HEK293 (cell line): ENCODE measurements at regions of chr19 and their contacts with region 1.

Region 1: DNA sequence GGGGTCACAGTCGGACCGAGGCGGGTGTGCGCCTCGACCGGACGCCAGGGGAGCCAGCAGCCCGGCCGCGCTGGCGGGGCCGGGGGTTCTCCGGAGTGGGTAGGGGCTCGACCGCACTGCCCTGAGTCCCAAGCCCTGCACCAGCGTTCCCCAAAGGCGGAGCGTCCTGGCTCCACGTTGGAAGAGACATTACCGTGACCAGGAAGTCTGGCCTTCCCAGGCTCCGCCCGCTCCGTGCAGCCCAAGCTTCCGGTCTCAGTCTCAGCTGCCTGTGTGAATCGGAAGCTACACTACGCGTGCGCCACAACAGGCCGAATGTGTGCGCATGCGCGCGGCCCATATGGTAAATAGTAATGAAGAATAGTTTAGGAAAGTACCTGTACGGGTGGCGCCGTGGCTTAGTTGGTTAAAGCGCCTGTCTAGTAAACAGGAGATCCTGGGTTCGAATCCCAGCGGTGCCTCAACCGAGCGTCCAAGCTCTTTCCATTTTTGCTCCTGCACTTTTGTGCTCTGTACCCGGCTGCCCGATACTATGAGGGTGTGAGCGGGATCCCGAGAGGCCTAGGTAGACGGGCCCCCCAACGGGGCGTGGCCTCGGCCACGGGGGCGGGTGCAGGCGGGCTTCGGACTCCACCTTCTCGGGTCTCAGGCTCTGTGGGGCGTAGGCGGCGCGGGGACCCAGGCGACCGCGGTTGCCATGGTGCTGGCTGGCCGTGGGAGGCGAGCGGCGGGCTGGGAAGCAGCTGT is 17.3 kb upstream of the LRP3 start:
- H3K4me3 ChIP-seq: peak overlapping the region; percentile 59
- H3K27ac ChIP-seq: peak overlapping the region; percentile 88
- H3K4me1 ChIP-seq: peaks cover 20% of the 10 kb centered on the region
- CTCF ChIP-seq: no peak; the same call in 1 of the 2 replicates

Region 2: GRCh38 chr19:33143897-33144405 is 32.9 kb before region 1 on chr19:
- CTCF ChIA-PET with region 1: interaction called, 79 read pairs
- POLR2A ChIA-PET with region 1: interaction called, 12 read pairs
- H3K4me3 ChIP-seq: no peak overlapping the region
- H3K27ac ChIP-seq: no peak overlapping the region
- H3K4me1 ChIP-seq: peaks cover 3% of the 10 kb centered on the region; the same call in 1 of the 2 replicates
- CTCF ChIP-seq: peak; percentile 99

Region 3: DNA sequence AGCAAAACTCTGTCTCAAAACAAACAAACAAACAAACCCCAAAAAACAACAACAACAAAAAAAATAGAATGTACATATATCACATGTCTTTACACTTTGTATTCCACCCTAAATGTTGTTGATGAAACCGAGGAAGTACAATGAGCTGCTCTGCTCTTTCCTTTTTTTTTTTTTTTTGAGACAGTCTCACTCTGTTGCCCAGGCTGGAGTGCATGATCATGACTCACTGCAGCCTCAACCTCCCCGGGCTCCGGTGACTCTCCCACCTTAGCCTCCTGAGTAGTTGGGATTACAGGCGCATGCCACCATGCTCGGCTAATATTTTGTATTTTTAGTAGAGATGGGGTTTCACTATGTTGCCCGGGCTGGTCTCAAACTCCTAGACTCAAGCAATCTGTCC is 13.4 kb before region 1 on chr19:
- CTCF ChIA-PET with region 1: interaction called, 35 read pairs
- POLR2A ChIA-PET with region 1: interaction called, 43 read pairs
- H3K4me3 ChIP-seq: no peak overlapping the region
- H3K27ac ChIP-seq: no peak overlapping the region
- H3K4me1 ChIP-seq: peaks cover 9% of the 10 kb centered on the region
- CTCF ChIP-seq: no peak

Region 4: GRCh38 chr19:33302175-33302973 is 125.5 kb after region 1 on chr19 and contains the start of gene CEBPA:
- CTCF ChIA-PET with region 1: no interaction called
- POLR2A ChIA-PET with region 1: interaction called, 17 read pairs
- H3K4me3 ChIP-seq: peak within 1 kb of the TSS; percentile 48
- H3K27ac ChIP-seq: peak within 1 kb of the TSS; percentile 98
- H3K4me1 ChIP-seq: peaks cover 68% of the 10 kb centered on the region
- CTCF ChIP-seq: peak; percentile 63; the same call in 1 of the 2 replicates